Posterior cingulate gyrus (tissue), 11 donors: ENCODE measurements at regions of chr2 and their contacts with region 1.

Region 1: GRCh38 chr2:209334198-209335017 is 89.4 kb upstream of the MAP2 start:
- DNase-seq: peak in 9 of 10 donors; percentile 32 to 89 (median 54)

Region 2: DNA sequence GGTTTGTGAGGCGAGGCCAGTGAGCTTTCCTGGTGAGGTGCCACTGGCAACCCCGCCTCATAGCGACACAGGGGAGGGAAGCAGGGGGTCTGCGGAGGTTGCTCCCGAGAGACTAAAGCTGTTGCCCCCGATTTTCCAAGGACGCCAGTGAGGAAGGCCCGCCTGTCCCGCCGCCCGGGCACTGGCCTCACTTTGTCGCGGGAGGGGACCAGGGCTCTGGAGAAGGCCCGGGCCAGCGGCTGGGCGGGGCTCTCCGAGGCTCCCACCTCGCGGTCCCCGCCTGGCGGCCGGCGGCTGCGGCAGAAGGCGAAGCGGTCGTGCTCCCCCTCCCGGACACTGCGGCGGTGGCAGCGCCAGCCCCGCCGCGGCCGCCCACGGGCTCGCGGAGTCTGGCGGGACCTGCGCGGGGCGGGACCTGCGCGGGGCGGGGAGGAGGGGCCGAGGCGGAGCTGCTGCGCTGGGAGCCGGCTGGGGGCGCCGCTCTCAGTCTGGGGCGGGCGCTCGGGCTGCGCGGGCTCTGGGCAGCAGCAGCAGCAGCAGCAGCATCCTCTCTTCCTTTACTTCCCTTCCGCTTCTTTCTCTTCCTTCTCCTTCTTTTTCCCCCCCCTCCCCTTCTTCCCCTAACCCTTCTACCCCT is 89.3 kb after region 1 on chr2 and contains the start of gene MAP2:
- intact Hi-C with region 1: loop called (anchors 1 kb)
- DNase-seq: peak; percentile 73 to 98 (median 86)

Region 3: GRCh38 chr2:209577376-209578357 is 243.3 kb after region 1 on chr2:
- intact Hi-C with region 1: loop called (anchors 1 kb)
- DNase-seq: no peak

Region 4: GRCh38 chr2:209977386-209978239 is 643.2 kb after region 1 on chr2:
- intact Hi-C with region 1: loop called (anchors 10 kb)
- DNase-seq: no peak